ENCODE measurements at regions of chr9 and their contacts with region 1.

Region 1: DNA sequence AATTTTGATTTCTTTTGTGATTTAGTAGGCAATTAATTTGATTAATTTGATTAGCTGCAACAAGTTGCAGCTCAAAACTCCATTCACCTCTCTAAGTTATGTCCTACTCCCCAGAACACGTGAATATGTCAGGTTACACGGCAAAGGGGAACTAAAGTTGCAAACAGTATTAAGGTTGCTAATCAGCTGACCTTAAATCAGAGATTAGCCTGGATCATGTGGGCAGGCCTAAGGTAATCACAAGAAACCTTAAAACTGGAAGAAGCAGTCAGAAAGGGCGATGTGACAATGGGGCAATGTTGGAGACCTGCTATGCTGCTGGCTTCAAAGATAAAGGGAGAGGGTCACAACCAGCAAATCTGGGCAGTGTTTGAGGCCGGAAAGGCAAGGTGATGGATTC is 47.3 kb upstream of the ANXA1 start:
- DNase-seq: no peak
- H3K4me3 ChIP-seq: no peak overlapping the region
- CTCF ChIP-seq: no peak

Region 2: GRCh38 chr9:73011181-73011750 is 93.1 kb before region 1 on chr9:
- in situ Hi-C with region 1: no loop called
- DNase-seq: peak; percentile 18
- H3K4me3 ChIP-seq: no peak overlapping the region
- CTCF ChIP-seq: no peak

Region 3: GRCh38 chr9:73023025-73023541 is 81.3 kb before region 1 on chr9:
- in situ Hi-C with region 1: no loop called
- DNase-seq: peak; percentile 52
- H3K4me3 ChIP-seq: no peak overlapping the region
- CTCF ChIP-seq: peak; percentile 85

Region 4: GRCh38 chr9:73183917-73184861 is 79.8 kb after region 1 on chr9:
- in situ Hi-C with region 1: loop called (anchors 5 kb)
- DNase-seq: peak; percentile 36
- H3K4me3 ChIP-seq: no peak overlapping the region
- CTCF ChIP-seq: no peak

Measured in astrocyte of the cerebellum (primary cell).